ENCODE measurements at regions of chr18 and their contacts with region 1.

Region 1: GRCh38 chr18:12295901-12296386 is 12.1 kb upstream of the TUBB6 start:
- DNase-seq: no peak
- H3K4me3 ChIP-seq: no peak overlapping the region
- H3K27ac ChIP-seq: no peak overlapping the region
- H3K4me1 ChIP-seq: no peaks in the 10 kb centered on the region
- H3K27me3 ChIP-seq: no peaks in the 10 kb centered on the region
- CTCF ChIP-seq: no peak

Region 2: GRCh38 chr18:12113999-12114646 is 181.8 kb before region 1 on chr18:
- CTCF ChIA-PET with region 1: no interaction called
- POLR2A ChIA-PET with region 1: no interaction called
- intact Hi-C with region 1: no loop called
- DNase-seq: no peak
- H3K4me3 ChIP-seq: no peak overlapping the region
- H3K27ac ChIP-seq: no peak overlapping the region
- H3K4me1 ChIP-seq: no peaks in the 10 kb centered on the region
- H3K27me3 ChIP-seq: no peaks in the 10 kb centered on the region
- CTCF ChIP-seq: no peak

Region 3: GRCh38 chr18:12271376-12272235 is 24.3 kb before region 1 on chr18:
- CTCF ChIA-PET with region 1: interaction called, 10 read pairs
- POLR2A ChIA-PET with region 1: no interaction called
- intact Hi-C with region 1: loop called (anchors 2 kb)
- DNase-seq: peak; percentile 88
- H3K4me3 ChIP-seq: peak overlapping the region; percentile 56
- H3K27ac ChIP-seq: peak overlapping the region; percentile 38
- H3K4me1 ChIP-seq: no peaks in the 10 kb centered on the region
- H3K27me3 ChIP-seq: no peaks in the 10 kb centered on the region
- CTCF ChIP-seq: peak; percentile 88